ENCODE measurements at regions of chr15 and their contacts with region 1.

Region 1: DNA sequence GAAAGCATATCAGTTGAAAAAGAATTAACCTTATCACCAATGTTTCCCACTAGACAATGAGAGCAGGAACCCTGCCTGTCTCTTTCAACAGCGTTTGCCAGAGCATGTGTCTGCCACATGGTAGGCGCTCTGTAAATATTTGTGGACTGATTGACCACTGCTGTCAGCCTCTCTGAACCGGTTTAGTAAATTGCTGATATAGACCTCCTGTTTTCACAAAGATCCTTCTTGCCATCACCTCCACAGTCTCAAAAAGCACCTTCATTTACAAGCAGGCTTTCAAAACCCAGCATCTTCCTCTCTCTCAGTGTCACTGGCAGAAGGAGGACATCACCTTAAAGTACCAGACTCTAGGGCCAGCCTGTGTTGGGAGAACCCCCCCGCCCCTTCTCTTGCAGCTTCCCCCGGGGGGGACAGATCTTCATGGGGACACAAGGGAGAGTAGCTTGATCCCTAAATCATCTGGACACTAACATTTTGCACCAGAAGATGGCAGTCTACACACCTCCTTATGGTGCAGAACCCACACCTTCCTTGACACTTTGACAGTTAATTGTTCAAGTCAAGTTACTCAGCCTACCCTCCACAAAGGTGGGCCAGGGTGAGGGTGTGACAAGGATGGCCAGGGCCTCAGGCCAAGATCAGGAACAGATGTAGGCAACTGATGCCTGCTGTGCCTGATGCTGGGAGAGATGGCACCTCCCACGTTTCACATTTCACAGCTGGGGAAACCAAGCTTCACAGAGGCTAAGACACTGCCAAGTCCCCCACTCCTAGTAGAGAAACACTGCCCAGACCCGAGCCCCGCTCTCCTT is 37.8 kb upstream of the USP3 start:
- DNase-seq: peak; percentile 68
- ATAC-seq: peak; percentile 94
- H3K4me3 Mint-ChIP-seq: no peak overlapping the region
- H3K27ac Mint-ChIP-seq: no peak overlapping the region
- H3K4me1 Mint-ChIP-seq: peaks cover 16% of the 10 kb centered on the region
- H3K27me3 Mint-ChIP-seq: peaks cover 3% of the 10 kb centered on the region

Region 2: GRCh38 chr15:63436872-63437375 is 29.7 kb before region 1 on chr15:
- CTCF ChIA-PET with region 1: interaction called, 12 read pairs
- DNase-seq: peak; percentile 71
- ATAC-seq: peak; percentile 92
- H3K4me3 Mint-ChIP-seq: no peak overlapping the region
- H3K27ac Mint-ChIP-seq: peak overlapping the region; percentile 57
- H3K4me1 Mint-ChIP-seq: peaks cover 18% of the 10 kb centered on the region
- H3K27me3 Mint-ChIP-seq: no peaks in the 10 kb centered on the region

Region 3: DNA sequence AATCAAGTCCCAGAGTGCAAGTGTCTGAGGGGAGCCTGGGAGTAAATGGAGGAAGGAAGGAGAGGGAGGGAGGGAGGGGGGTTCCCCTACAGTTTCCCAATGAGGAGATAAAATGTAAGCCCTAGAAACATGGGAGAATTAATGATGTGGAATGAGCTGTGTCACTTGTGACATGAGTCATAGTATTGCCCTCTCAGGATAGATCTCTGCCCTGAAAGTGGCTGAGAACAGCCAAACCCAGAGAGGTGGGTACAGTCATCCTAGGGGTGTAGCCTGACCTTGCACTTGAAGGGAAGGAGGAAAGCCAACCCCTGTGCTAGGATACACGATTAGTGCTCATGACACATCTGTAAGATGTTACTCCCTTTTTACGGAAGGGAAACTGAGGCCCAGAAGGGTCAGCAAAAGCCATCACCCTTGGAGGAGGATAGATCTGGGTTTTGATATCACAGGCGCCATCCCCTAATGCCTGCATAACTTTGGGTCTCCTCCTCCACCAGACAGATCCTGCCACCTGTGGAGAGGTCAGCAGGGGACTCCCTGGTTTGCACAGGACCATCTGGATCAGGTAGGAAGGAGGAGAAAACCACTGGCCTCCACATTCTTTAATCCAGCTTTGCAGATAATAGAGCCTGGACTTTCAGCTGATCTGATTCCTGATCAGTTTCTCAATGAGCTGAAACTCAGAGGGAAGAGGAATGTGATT is 14.7 kb after region 1 on chr15:
- CTCF ChIA-PET with region 1: interaction called, 22 read pairs
- DNase-seq: no peak
- ATAC-seq: peak; percentile 37
- H3K4me3 Mint-ChIP-seq: no peak overlapping the region
- H3K27ac Mint-ChIP-seq: no peak overlapping the region
- H3K4me1 Mint-ChIP-seq: peaks cover 51% of the 10 kb centered on the region
- H3K27me3 Mint-ChIP-seq: no peaks in the 10 kb centered on the region

Region 4: GRCh38 chr15:63504247-63504978 is 37.8 kb after region 1 on chr15 and contains the start of gene USP3:
- CTCF ChIA-PET with region 1: interaction called, 38 read pairs
- DNase-seq: peak; percentile 95
- ATAC-seq: peak; percentile 65
- H3K4me3 Mint-ChIP-seq: peak within 1 kb of the TSS; percentile 90
- H3K27ac Mint-ChIP-seq: peak within 1 kb of the TSS; percentile 93
- H3K4me1 Mint-ChIP-seq: peaks cover 73% of the 10 kb centered on the region
- H3K27me3 Mint-ChIP-seq: no peaks in the 10 kb centered on the region
- total RNA-seq, gene USP3: 50.5 to 67.1 TPM

Region 5: DNA sequence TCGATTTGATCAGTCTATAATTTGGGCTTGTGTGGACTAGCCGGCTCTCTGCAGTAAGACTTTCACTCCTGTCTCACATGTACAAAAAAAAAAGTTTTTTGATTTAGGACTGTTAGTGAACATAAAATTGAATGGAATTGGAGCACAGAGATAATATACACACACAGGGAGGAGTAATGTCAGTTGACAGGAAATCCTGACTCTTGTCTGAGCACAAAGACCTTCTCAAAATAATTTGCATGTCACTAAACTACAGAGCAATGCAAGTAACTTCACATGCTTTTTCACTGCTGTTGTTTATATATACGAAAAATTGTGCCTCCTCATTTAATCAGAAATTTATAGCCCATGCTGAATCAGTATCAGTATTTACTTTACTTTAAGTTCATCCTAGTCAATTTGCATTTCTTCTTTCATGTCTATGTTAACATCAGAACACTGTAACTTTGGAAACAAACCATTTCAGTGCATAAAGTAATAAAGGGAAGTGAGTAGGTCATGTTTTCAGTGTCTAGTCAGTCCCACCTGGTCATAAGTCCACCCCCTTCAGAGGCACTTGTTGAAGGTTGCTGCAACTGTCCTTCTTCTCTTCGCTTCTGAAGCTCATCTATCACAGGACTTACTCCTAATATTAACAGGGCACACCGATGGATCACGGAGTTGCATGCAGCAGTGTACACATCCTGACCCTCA is 246.4 kb after region 1 on chr15:
- CTCF ChIA-PET with region 1: no interaction called
- DNase-seq: no peak
- ATAC-seq: no peak
- H3K4me3 Mint-ChIP-seq: no peak overlapping the region
- H3K27ac Mint-ChIP-seq: peak overlapping the region; percentile 18
- H3K4me1 Mint-ChIP-seq: peaks cover 17% of the 10 kb centered on the region
- H3K27me3 Mint-ChIP-seq: no peaks in the 10 kb centered on the region

Region 6: GRCh38 chr15:64067564-64068030 is 601.0 kb after region 1 on chr15:
- CTCF ChIA-PET with region 1: interaction called, 12 read pairs
- DNase-seq: peak; percentile 79
- ATAC-seq: peak; percentile 87
- H3K4me3 Mint-ChIP-seq: no peak overlapping the region
- H3K27ac Mint-ChIP-seq: peak overlapping the region; percentile 57
- H3K4me1 Mint-ChIP-seq: peaks cover 23% of the 10 kb centered on the region
- H3K27me3 Mint-ChIP-seq: no peaks in the 10 kb centered on the region

Measured in activated CD8-positive, alpha-beta memory T cell treated with anti-CD3 and anti-CD28 coated beads, Interleukin-2, amount 10 ng/mL, durations not matched to agents 7 days and 5 days (primary cell).